GM12878 (cell line): ENCODE measurements at regions of chr14 and their contacts with region 1.

Region 1: GRCh38 chr14:105203057-105203531 is 22.0 kb upstream of the NUDT14 start:
- DNase-seq: no peak
- ATAC-seq: peak; percentile 72
- H3K4me3 ChIP-seq: no peak overlapping the region
- H3K27ac ChIP-seq: no peak overlapping the region
- H3K4me1 ChIP-seq: peaks cover 7% of the 10 kb centered on the region
- H3K27me3 ChIP-seq: peaks cover 0 to 2% of the 10 kb centered on the region in 2 experiments; a peak in 2 of 4 replicates
- CTCF ChIP-seq: peak; percentile 83 to 96 (median 87)
- EP300 ChIP-seq: no peak
- POLR2A ChIP-seq: no peak
- RAD21 ChIP-seq: peak; percentile 61

Region 2: DNA sequence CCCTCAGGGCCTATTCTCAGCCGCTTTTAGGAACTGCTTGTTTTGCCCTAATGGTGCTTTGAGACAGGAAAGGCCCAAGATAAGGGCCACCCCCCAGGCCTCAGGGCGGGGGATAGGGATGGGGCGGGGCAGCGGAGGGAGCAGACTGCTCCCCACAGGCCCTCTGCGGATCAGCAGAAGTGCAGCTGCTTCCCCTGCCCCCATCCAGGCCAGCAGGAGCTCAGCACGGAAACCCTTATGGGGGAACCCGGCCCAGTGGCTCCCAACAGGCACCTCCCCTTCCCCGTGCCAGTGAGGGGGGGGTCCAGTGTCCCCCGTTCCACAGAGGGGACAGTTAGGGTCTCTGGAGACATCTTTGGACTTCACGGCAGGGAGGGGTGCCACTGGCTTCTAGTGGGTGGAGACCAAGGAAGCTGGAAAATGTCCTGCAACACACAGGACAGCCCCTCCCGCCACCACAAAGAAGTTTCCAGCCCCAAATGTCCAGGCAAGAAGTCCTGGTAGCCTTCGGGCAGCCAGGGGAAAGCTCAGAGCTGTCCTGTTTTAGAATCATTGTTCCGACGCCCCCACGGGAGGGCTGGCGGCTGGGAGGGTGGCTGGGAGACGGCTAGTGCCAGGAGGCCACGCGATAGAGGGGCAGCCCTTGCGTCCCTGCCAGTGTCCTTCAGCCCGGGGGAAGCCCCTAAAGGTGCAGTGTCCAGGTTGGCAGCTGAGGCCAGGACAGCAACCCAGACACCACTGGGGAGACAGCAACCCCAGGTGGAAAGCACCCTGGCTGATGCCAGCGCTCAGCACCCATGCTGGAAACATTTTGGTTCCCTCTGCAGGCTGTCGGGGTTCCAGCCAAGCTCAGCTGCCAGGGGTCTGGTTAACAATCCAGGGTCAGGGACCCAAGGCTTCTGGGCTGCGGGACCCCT is 127.5 kb before region 1 on chr14:
- CTCF ChIA-PET with region 1: no interaction called
- POLR2A ChIA-PET with region 1: no interaction called
- RAD21 ChIA-PET with region 1: no interaction called
- SMC1A ChIA-PET with region 1: no interaction called
- in situ Hi-C with region 1: no loop called
- intact Hi-C with region 1: no loop called
- DNase-seq: no peak
- ATAC-seq: peak; percentile 88
- H3K4me3 ChIP-seq: no peak overlapping the region
- H3K27ac ChIP-seq: peak overlapping the region; percentile 38
- H3K4me1 ChIP-seq: peaks cover 33% of the 10 kb centered on the region
- H3K27me3 ChIP-seq: no peaks in the 10 kb centered on the region
- CTCF ChIP-seq: 0 out of 6 replicates have a peak, but pooled peaks of 1 of the 3 experiments have one; percentile 3
- EP300 ChIP-seq: no peak
- POLR2A ChIP-seq: no peak
- RAD21 ChIP-seq: no peak

Region 3: DNA sequence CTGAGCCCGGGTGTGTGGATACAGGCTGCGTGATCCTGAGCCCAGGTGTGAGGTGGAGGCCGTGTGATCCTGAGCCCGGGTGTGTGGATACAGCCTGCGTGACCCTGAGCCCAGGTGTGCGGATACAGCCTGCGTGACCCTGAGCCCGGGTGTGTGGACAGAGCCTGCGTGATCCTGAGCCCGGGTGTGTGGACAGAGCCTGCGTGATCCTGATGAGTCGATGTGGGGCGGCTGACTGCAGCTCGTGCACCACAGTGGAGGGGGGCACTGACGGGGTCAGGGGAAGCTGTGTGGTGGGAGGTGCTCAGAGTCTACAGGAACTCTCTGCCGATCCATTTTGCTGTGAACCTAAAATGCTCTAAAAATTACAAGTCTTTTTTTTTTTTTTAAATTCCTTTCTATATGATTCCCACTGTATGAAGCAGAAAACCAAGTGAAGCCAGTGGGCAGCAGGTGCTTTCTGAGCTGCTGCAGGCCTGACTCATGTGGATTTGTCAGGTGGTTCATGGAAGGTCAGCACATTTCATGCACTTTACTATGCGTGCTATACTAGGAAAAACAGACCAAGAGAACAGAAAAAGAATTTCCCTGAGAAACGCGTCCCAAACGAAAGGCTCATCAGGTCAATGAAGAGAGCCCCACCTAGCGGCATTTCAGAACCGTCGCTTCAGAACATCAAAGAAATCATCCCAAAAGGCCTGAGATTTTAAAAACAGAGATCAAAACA is 78.4 kb after region 1 on chr14:
- CTCF ChIA-PET with region 1: interaction called, 3 read pairs
- POLR2A ChIA-PET with region 1: no interaction called
- RAD21 ChIA-PET with region 1: no interaction called
- SMC1A ChIA-PET with region 1: no interaction called
- in situ Hi-C with region 1: no loop called
- intact Hi-C with region 1: loop called (anchors 2 kb)
- DNase-seq: no peak
- ATAC-seq: peak; percentile 55
- H3K4me3 ChIP-seq: no peak overlapping the region
- H3K27ac ChIP-seq: no peak overlapping the region
- H3K4me1 ChIP-seq: no peaks in the 10 kb centered on the region; the same call in 1 of the 2 replicates
- H3K27me3 ChIP-seq: no peaks in the 10 kb centered on the region
- CTCF ChIP-seq: peak; percentile 56 to 72 (median 70)
- EP300 ChIP-seq: no peak
- POLR2A ChIP-seq: no peak
- RAD21 ChIP-seq: peak; percentile 67

Region 4: DNA sequence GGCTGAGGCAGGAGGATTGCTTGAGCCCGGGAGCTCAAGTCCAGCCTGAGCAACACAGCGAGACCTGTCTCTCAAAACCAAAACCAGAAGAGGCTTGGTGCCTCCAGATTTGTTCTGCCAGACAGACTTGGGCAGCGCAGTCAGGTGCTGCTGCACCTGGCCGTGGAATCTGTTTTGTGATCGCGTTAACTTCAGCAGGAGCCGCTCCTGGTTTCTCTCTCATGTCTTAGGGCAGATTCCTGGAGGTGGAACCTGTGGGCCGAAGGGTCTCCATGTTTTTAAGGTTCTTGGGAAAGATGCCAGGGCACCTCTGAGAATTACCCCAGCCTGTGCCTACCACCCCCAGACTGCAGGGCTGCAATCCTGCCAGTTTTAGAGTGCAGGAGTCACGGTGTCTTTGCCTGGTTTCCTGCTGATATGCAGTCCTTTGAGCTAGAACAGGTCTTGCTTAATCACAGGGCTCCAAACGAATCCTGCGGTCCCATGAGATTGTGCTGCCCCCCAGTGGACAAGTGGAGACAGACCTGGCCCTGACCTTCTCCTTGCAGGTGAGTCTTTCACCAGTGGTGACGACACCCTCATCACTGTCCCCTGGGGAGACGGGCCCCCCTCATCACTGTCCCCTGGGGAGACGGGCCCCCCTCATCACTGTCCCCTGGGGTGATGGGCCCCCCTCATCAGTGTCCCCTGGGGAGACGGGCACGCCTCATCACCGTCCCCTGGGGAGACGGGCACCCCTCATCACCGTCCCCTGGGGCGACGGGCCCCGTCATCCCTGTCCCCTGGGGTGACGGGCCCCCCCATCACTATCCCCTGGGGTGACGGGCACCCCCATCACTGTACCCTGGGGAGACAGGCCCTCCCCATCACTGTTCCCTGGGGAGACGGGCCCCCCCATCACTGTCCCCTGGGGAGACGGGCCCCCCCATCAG is 149.1 kb after region 1 on chr14:
- CTCF ChIA-PET with region 1: interaction called, 14 read pairs
- POLR2A ChIA-PET with region 1: no interaction called
- RAD21 ChIA-PET with region 1: interaction called, 3 read pairs
- SMC1A ChIA-PET with region 1: interaction called, 5 read pairs
- in situ Hi-C with region 1: loop called (anchors 5 kb)
- intact Hi-C with region 1: loop called (anchors 1 kb)
- DNase-seq: peak; percentile 54
- ATAC-seq: peak; percentile 100
- H3K4me3 ChIP-seq: no peak overlapping the region
- H3K27ac ChIP-seq: no peak overlapping the region
- H3K4me1 ChIP-seq: no peaks in the 10 kb centered on the region; the same call in 1 of the 2 replicates
- H3K27me3 ChIP-seq: no peaks in the 10 kb centered on the region
- CTCF ChIP-seq: peak; percentile 87 to 91 (median 88)
- EP300 ChIP-seq: no peak
- POLR2A ChIP-seq: no peak
- RAD21 ChIP-seq: peak; percentile 96